Heart left ventricle (tissue), 16 donors: ENCODE measurements at regions of chr1 and their contacts with region 1.

Region 1: GRCh38 chr1:56831871-56832693 is 12.9 kb upstream of the FYB2 start:
- DNase-seq: peak; percentile 47 to 78 (median 60)
- ATAC-seq: peak; percentile 65 to 85 (median 74)
- H3K4me3 ChIP-seq: peak overlapping the region in 3 of 12 donors; percentile 2 to 31 (median 15)
- H3K27ac ChIP-seq: no peak overlapping the region
- H3K4me1 ChIP-seq: peaks cover 0 to 6% (median 0%) of the 10 kb centered on the region in 12 donors
- H3K27me3 ChIP-seq: peaks cover 0 to 4% (median 0%) of the 10 kb centered on the region in 9 donors
- CTCF ChIP-seq: peak; percentile 95 to 99 (median 98)
- POLR2A ChIP-seq: no peak

Region 2: DNA sequence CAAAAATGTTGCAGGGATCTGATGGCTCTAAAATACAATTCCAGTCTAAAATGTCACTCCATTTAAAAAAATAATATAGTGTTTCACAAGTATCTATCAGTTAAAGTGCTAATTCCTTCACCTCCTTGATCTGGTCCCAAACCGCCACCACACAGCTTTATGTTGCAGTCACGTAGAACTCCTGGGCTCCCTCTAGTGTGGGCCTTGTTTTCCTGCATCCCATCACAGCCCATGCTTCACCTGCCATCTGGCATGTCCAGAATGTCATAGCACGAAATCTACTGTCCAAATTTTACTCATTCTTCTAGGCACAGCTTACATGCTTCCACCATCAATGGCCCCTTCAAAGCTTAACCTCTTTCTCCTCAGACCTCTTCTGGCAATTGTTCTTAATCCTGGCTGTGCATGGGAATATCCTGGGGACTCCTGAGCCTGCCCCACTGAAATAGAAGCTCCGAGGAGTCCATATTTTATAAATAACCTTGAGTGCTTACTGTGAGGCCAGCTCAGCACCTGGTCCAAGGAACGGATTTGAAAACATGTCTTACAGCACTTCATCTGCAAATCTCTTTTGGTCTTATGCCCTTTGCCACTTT is 28.4 kb before region 1 on chr1:
- intact Hi-C with region 1: no loop called
- DNase-seq: peak in 1 of 5 donors; percentile 15
- ATAC-seq: no peak
- H3K4me3 ChIP-seq: no peak overlapping the region
- H3K27ac ChIP-seq: peak overlapping the region in 2 of 12 donors; percentile 28 to 47
- H3K4me1 ChIP-seq: peaks cover 0 to 32% (median 7%) of the 10 kb centered on the region in 12 donors
- H3K27me3 ChIP-seq: no peaks in the 10 kb centered on the region
- CTCF ChIP-seq: peak in 9 of 12 donors; percentile 15 to 43 (median 31)
- POLR2A ChIP-seq: no peak

Region 3: DNA sequence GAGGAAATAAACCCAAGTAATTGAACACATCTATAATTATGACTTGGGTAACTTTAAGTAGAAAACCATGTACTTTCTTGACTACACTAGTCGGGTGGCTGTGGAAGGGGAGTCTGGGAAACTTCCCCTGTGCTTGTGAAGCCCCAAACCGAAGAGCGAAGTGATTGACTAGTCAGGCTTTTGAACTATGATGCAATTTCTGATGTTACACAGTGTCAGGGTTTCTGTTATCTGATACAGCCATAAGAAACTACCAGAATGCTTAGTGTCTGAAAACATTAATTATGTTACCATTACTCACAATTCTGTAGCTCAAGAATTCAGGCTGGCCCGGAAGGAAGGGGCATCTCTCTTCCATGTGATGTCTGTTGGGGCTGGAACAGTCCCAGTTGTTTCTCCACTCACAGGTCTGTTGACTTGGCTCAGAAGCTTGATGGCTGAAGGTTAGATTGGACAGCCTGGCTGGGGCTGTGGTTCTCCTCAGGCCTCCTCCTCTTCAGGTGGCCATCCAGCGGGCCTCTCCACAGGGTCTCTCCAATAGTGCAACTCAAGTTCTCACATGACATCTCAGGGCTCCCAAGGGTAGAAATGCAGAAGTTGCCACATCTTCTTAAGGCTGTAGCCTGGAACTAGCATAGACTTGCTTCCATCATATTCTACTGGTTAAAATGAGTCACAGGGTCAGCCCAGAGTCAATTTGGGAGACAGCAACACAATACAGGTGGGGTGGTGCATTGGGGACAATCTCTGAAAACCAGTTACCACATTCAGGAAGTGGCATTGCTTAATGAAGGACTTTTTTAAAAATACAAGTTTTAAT is 142.1 kb after region 1 on chr1:
- intact Hi-C with region 1: loop called in 6 of 10 experiments (anchors 2 to 10 kb)
- DNase-seq: no peak
- ATAC-seq: no peak
- H3K4me3 ChIP-seq: no peak overlapping the region
- H3K27ac ChIP-seq: no peak overlapping the region
- H3K4me1 ChIP-seq: no peaks in the 10 kb centered on the region
- H3K27me3 ChIP-seq: no peaks in the 10 kb centered on the region
- CTCF ChIP-seq: no peak
- POLR2A ChIP-seq: no peak

Region 4: DNA sequence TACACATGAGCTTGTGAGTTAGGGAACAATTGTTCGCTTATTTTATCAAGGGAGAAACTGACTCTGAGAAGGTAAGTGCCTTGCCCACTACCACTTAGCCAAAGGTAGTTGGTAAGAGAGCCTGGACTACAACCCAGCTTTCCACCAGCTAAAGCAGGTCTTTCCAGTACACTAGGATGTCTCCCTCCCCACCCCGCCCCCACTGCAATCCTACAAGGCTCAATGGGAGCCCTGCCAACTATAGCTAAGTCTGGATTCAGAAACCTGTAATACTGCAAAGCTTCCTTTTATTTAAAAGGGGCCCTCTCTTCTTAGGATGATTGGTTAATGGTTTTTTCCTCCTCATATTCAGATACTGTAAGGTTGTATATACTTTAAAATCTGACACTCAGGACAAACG is 235.8 kb after region 1 on chr1:
- intact Hi-C with region 1: loop called in 3 of 10 experiments (anchors 5 to 10 kb)
- DNase-seq: peak in 4 of 5 donors; percentile 36 to 47 (median 38)
- ATAC-seq: peak in 2 of 4 donors; percentile 44 to 47
- H3K4me3 ChIP-seq: no peak overlapping the region
- H3K27ac ChIP-seq: peak overlapping the region in 1 of 12 donors; percentile 4
- H3K4me1 ChIP-seq: peaks cover 0 to 19% (median 0%) of the 10 kb centered on the region in 12 donors
- H3K27me3 ChIP-seq: no peaks in the 10 kb centered on the region
- CTCF ChIP-seq: no peak
- POLR2A ChIP-seq: no peak

Region 5: DNA sequence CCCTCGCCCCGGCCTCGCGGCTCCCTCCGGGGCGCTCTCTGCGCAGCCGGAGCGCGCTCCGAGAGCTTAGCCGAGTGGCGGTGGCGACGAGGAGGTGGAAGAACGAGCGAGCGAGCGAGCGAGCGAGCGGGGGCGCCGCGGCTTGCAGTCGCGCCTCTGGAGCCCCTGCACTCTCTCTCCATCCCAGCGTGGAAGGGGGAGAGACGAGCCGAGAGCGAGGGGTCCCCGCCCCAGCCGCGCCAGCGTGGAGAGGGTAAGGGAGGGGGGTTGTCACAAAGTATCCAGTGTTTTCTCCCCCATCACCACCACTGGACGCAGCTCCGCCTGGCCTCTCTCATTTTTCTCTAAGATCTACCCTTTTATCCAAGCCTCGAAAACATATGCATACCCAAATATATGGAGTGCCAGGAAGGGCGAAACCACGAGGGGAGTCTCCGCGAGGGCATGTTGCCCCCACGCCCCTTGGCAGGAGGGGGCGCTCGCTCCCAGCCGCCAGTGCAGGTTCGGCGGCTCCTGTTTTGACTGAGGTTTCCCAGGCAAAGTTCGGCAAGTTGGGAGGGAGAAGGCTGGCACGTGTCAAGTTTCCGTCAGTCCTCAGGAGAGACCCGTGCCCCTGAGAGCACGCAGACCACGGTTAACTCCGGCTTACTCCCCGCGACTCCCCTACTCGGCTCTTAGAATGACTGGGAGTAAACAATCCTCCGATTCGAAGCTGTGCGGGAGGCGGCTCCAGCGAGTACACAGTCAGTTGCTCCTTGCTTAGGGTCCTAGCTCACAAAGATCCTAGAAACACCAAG is 592.3 kb after region 1 on chr1:
- intact Hi-C with region 1: loop called in 1 of 10 experiments (anchors 5 kb)
- DNase-seq: peak; percentile 28 to 73 (median 50)
- ATAC-seq: peak; percentile 33 to 78 (median 72)
- H3K4me3 ChIP-seq: peak overlapping the region; percentile 26 to 60 (median 53)
- H3K27ac ChIP-seq: peak overlapping the region in 7 of 12 donors; percentile 11 to 57 (median 45)
- H3K4me1 ChIP-seq: peaks cover 0 to 28% (median 1%) of the 10 kb centered on the region in 12 donors
- H3K27me3 ChIP-seq: peaks cover 0 to 57% (median 14%) of the 10 kb centered on the region in 9 donors
- CTCF ChIP-seq: peak; percentile 37 to 79 (median 64)
- POLR2A ChIP-seq: no peak

Region 6: DNA sequence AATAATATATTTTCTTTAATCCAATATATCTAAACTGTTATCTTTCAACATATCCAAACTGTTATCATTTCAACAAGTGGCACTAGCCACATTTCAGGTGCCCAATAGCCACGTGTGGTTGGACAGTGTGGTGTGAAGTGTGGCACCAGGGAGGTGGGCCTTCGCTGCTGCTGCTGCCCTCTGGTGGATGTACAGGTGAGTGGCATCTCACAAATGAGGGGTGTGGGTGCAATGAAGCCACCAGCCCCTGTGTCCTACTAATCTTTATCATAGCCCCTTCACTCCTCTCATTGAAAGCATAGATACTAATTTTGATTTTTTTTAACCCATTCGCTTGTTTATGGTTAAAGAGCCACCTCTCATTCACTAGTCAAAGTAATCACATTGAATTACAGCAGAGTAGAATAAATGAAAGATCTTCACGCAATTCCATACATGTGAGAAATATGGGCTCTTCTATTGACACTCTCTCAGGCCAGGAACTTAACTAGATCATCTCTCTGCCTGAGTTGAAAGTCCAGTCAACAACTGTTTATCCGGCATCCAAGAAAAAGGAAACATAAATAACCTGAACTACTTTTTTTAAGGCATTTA is 1215.3 kb after region 1 on chr1:
- intact Hi-C with region 1: loop called in 7 of 10 experiments (anchors 2 to 10 kb)
- DNase-seq: no peak
- ATAC-seq: peak in 1 of 4 donors; percentile 61
- H3K4me3 ChIP-seq: no peak overlapping the region
- H3K27ac ChIP-seq: no peak overlapping the region
- H3K4me1 ChIP-seq: no peaks in the 10 kb centered on the region
- H3K27me3 ChIP-seq: no peaks in the 10 kb centered on the region
- CTCF ChIP-seq: peak; percentile 49 to 77 (median 62)
- POLR2A ChIP-seq: no peak

Region 7: GRCh38 chr1:58546520-58547308 is 1714.6 kb after region 1 on chr1 and contains the start of gene OMA1:
- intact Hi-C with region 1: loop called in 1 of 10 experiments (anchors 5 kb)
- DNase-seq: peak; percentile 97 to 99 (median 99)
- ATAC-seq: peak; percentile 99
- H3K4me3 ChIP-seq: peak within 1 kb of the TSS; percentile 60 to 97 (median 83)
- H3K27ac ChIP-seq: peak within 1 kb of the TSS; percentile 96 to 100 (median 99)
- H3K4me1 ChIP-seq: peaks cover 0 to 17% (median 11%) of the 10 kb centered on the region in 12 donors
- H3K27me3 ChIP-seq: no peaks in the 10 kb centered on the region
- CTCF ChIP-seq: peak; percentile 94 to 99 (median 97)
- POLR2A ChIP-seq: peak in 1 of 2 donors; percentile 83
- total RNA-seq, gene OMA1: 23.5 to 44.5 (median 37.2) TPM